ENCODE measurements at regions of chr1 and their contacts with region 1.

Region 1: DNA sequence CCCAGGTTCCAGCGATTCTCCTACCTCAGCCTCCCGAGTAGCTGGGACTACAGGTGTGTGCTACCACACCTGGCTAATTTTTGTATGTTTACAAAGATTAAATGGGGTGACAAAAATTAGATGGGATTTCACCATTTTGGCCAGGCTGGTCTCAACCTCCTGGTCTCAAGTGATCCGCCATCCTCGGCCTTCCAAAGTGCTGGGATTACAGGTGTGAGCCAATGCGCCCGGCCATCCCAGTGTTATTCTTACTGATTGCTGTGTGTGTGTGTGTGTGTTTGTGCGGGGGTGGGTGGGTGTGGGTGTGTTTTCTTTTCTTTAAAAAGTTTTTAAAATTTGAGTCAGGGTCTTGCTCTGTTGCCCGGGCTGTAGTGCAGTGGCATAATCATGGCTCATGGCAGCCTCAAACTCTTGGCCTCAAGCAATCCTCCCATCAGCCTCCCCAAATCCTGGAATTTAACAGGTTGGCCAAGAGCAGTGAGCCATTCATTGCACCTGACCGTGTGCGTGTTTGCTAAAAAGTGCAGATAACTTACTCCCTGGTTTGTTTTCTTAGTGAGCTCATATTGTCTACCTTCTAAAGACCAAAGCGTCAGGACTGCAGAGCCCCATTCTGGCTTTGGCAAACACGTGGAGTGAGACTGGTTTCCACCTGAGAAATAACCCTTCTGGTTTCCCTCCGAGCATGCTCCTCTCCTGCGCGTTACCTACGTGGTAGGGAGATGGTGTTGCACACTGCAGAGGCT is 32.4 kb upstream of the CA6 start:
- DNase-seq: no peak
- ATAC-seq: no peak
- H3K4me3 Mint-ChIP-seq: no peak overlapping the region
- H3K27ac Mint-ChIP-seq: no peak overlapping the region
- H3K4me1 Mint-ChIP-seq: peaks cover 30% of the 10 kb centered on the region
- H3K27me3 Mint-ChIP-seq: no peaks in the 10 kb centered on the region

Region 2: GRCh38 chr1:8604041-8604945 is 309.0 kb before region 1 on chr1:
- CTCF ChIA-PET with region 1: no interaction called
- DNase-seq: peak; percentile 76
- ATAC-seq: peak; percentile 85
- H3K4me3 Mint-ChIP-seq: peak overlapping the region; percentile 70
- H3K27ac Mint-ChIP-seq: peak overlapping the region; percentile 95
- H3K4me1 Mint-ChIP-seq: peaks cover 40% of the 10 kb centered on the region
- H3K27me3 Mint-ChIP-seq: no peaks in the 10 kb centered on the region

Region 3: GRCh38 chr1:8754993-8755392 is 158.3 kb before region 1 on chr1:
- CTCF ChIA-PET with region 1: no interaction called
- DNase-seq: no peak
- ATAC-seq: no peak
- H3K4me3 Mint-ChIP-seq: no peak overlapping the region
- H3K27ac Mint-ChIP-seq: no peak overlapping the region
- H3K4me1 Mint-ChIP-seq: peaks cover 6% of the 10 kb centered on the region
- H3K27me3 Mint-ChIP-seq: no peaks in the 10 kb centered on the region

Region 4: DNA sequence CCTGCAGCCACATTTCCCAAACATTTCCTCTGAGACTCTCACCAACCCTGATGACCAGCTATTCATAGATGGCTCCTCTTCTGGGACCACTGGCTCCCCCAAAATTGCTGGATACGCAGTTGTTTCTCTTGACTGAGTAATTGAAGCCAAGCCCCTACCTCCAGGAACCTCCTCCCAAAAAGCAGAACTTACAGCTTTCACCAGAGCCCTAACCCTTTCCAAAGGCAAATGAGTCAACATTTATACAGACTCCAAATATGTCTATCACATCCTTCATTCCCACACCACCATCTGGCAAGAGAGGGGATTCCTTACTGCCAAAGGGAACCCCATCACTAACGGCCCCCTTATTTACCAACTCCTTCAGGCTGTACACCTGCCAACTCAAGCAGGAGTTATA is 12.1 kb after region 1 on chr1:
- CTCF ChIA-PET with region 1: interaction called, 11 read pairs
- DNase-seq: no peak
- ATAC-seq: no peak
- H3K4me3 Mint-ChIP-seq: no peak overlapping the region
- H3K27ac Mint-ChIP-seq: no peak overlapping the region
- H3K4me1 Mint-ChIP-seq: peaks cover 33% of the 10 kb centered on the region
- H3K27me3 Mint-ChIP-seq: no peaks in the 10 kb centered on the region

Region 5: GRCh38 chr1:8941906-8942305 is 28.6 kb after region 1 on chr1:
- CTCF ChIA-PET with region 1: interaction called, 25 read pairs
- DNase-seq: no peak
- ATAC-seq: no peak
- H3K4me3 Mint-ChIP-seq: peak overlapping the region; percentile 33
- H3K27ac Mint-ChIP-seq: peak overlapping the region; percentile 74
- H3K4me1 Mint-ChIP-seq: peaks cover 88% of the 10 kb centered on the region
- H3K27me3 Mint-ChIP-seq: no peaks in the 10 kb centered on the region